Natural killer cell (primary cell): ENCODE measurements at regions of chr1 and their contacts with region 1.

Region 1: GRCh38 chr1:185636848-185637247 is 97.3 kb upstream of the HMCN1 start:
- DNase-seq: no peak
- ATAC-seq: peak in 1 of 3 donors; percentile 71
- H3K4me3 ChIP-seq: no peak overlapping the region
- H3K4me3 Mint-ChIP-seq: no peak overlapping the region
- H3K27ac ChIP-seq: no peak overlapping the region
- H3K27ac Mint-ChIP-seq: no peak overlapping the region
- H3K4me1 ChIP-seq: no peaks in the 10 kb centered on the region
- H3K4me1 Mint-ChIP-seq: peaks cover 0 to 7% of the 10 kb centered on the region in 2 donors
- H3K27me3 ChIP-seq: no peaks in the 10 kb centered on the region
- H3K27me3 Mint-ChIP-seq: peaks cover 9 to 16% of the 10 kb centered on the region in 2 donors
- CTCF ChIP-seq: no peak

Region 2: GRCh38 chr1:185338719-185339622 is 297.9 kb before region 1 on chr1:
- intact Hi-C with region 1: no loop called
- DNase-seq: peak; percentile 39 to 71
- ATAC-seq: peak; percentile 81 to 88 (median 84)
- H3K4me3 ChIP-seq: no peak overlapping the region
- H3K4me3 Mint-ChIP-seq: peak overlapping the region; percentile 76
- H3K27ac ChIP-seq: peak overlapping the region; percentile 63
- H3K27ac Mint-ChIP-seq: peak overlapping the region; percentile 83 to 84
- H3K4me1 ChIP-seq: peaks cover 25% of the 10 kb centered on the region
- H3K4me1 Mint-ChIP-seq: peaks cover 39 to 44% of the 10 kb centered on the region in 2 donors
- H3K27me3 ChIP-seq: no peaks in the 10 kb centered on the region
- H3K27me3 Mint-ChIP-seq: no peaks in the 10 kb centered on the region
- CTCF ChIP-seq: no peak

Region 3: DNA sequence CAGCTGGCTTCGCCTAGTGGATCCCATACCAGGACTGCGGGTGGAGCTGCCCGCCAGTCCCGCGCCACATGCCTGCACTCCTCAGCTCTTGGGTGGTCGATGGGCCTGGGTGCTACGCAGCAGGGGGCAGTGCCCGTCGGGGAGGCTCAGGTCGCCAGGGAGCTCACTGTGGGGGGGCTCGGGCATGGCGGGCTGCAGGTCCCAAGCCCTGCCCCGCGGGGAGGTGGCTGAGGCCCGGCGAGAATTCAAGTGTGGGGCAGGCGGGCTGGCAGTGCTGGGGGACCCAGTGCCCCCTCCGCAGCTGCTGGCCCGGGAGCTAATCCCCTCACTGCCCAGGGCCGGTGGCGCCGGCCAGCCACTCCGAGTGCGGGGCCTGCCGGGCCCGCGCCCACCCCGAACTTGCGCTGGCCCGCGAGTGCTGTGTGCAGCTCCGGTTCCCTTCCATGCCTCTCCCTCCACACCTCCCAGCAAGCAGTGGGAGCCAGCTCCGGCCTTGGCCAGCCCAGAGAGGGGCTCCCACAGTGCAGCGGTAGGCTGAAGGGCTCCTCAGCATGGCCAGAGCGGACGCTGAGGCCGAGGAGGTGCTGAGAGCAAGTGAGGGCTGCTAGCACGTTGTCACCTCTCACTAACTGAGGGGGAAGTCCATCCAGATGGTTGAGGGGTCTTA is 12.1 kb after region 1 on chr1:
- intact Hi-C with region 1: loop called (anchors 1 kb)
- DNase-seq: no peak
- ATAC-seq: no peak
- H3K4me3 ChIP-seq: no peak overlapping the region
- H3K4me3 Mint-ChIP-seq: no peak overlapping the region
- H3K27ac ChIP-seq: no peak overlapping the region
- H3K27ac Mint-ChIP-seq: no peak overlapping the region
- H3K4me1 ChIP-seq: no peaks in the 10 kb centered on the region
- H3K4me1 Mint-ChIP-seq: peaks cover 9 to 12% of the 10 kb centered on the region in 2 donors
- H3K27me3 ChIP-seq: no peaks in the 10 kb centered on the region
- H3K27me3 Mint-ChIP-seq: peaks cover 0 to 5% of the 10 kb centered on the region in 2 donors
- CTCF ChIP-seq: no peak